HEK293 (cell line): ENCODE measurements at regions of chr2 and their contacts with region 1.

Region 1: DNA sequence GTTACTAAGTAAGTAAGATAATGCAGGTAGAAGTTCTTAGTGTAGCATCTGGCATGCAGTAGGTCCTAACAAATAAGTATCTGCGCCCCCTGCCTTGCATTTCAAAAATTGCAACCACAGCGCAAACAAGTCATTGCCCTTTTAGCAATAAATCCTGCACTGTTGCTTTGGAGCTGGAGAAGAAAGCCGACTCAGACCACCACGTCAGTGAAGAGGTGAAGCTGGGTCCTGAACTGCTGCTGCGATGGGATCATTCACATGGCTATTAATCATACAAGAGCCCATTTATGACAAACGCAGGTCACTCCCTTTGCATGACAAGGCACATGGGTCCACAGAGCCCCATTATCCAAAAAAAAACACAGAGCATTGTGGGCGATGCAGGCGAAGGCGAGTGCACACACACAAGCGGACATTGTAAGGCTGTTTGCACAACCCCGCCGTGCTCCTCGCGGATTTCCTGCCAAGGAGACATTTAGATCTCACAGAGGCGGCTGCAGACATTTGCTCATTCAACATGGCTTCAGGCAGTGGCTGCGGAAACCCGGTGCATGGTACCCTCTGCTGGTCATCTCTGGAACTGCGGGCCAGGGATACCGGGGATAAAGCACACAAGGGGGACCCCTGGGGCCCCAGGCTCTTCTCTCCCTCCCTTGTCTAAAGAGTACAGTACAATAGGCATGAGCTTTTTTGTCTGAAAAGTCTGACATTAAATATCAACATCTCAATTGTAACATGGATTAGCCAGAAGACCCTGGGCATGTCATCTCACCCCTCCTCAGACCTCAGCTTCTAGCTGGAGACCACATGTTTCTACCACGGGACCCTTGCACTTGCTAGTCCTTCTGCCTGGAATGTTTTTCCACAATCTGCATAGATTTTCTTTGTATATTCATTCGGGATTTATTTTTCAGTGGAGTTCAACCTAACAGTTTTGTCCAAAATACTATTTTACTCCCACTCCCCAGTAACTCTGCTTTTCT is 56.7 kb downstream of the CYRIA start:
- H3K4me3 ChIP-seq: peak overlapping the region; percentile 41
- H3K27ac ChIP-seq: peak overlapping the region; percentile 18; the same call in 1 of the 2 replicates
- H3K4me1 ChIP-seq: peaks cover 3% of the 10 kb centered on the region; the same call in 1 of the 2 replicates
- CTCF ChIP-seq: peak; percentile 58

Region 2: DNA sequence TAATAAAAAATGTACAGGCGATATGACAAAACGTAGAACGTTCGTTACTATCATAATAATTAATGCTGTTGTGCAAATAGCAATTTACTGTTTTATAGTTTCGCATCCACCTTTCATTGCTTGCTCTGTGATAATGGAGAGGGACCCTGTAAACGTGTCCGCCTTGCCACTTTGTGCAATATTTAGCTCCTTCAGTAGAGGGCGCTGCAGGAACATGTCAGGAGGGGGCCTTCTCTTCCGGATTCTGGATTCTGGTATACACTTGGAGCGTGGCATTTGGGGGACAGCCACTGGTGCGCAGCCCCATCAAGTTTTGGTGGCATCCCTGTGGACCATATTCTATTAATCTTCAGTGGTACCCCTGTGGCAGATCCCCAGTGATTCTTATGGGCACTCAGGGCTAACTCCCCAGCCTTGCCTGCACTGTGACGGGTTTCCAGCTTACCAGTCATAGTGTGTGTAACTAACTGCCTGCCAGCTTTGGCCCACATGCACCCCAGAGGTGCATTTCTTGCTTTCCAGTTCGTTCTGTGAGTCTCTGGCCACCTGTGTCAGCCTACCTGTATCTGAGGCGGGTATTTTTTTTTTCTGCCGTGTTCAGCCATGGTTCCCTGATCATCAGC is 83.6 kb before region 1 on chr2:
- CTCF ChIA-PET with region 1: interaction called, 57 read pairs
- POLR2A ChIA-PET with region 1: no interaction called
- H3K4me3 ChIP-seq: no peak overlapping the region
- H3K27ac ChIP-seq: no peak overlapping the region
- H3K4me1 ChIP-seq: no peaks in the 10 kb centered on the region
- CTCF ChIP-seq: peak; percentile 42; the same call in 1 of the 2 replicates

Region 3: GRCh38 chr2:16591370-16591933 is 17.5 kb before region 1 on chr2:
- CTCF ChIA-PET with region 1: interaction called, 10 read pairs
- POLR2A ChIA-PET with region 1: no interaction called
- H3K4me3 ChIP-seq: no peak overlapping the region
- H3K27ac ChIP-seq: no peak overlapping the region
- H3K4me1 ChIP-seq: no peaks in the 10 kb centered on the region
- CTCF ChIP-seq: no peak

Region 4: DNA sequence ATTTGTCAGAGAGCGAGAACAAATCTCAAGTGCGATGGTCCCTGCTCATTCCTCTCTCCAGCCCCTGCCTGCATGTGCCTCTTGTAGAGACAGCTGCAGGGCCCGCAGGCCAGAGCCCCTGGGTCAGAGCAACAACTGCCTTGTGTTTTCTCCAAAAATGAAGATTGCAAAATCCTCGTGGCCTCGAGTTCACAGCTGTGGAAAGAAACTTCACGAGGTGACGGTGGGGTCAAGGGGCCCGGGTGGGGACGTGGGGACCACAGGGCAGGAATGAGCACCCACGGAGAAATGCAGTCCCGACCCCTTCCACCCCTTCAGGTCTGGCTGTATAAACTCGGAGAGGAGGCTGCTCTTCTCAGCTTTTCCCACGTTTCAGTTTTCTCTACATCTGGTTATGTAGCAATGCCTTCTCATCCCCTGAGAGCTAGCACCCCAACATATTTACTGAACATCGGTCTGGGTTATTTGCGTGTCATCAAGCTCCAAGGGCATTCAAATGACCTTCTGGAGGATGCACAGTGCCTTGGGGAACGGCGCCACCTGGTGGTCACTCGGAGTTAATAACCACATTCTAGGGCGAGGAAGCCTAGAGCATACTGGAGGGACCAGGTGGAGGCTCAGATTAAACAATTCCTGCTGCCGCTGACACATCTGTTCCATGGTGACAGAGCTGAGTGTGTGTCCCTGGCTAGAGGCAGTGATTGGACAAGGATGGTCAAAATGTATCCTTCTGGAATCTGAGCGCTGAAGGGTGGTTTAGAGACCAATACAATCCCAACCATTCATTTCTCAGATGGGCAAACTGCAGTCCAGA is 148.1 kb after region 1 on chr2:
- CTCF ChIA-PET with region 1: interaction called, 126 read pairs
- POLR2A ChIA-PET with region 1: no interaction called
- H3K4me3 ChIP-seq: no peak overlapping the region
- H3K27ac ChIP-seq: no peak overlapping the region
- H3K4me1 ChIP-seq: no peaks in the 10 kb centered on the region
- CTCF ChIP-seq: peak; percentile 81

Region 5: GRCh38 chr2:16773080-16773713 is 164.2 kb after region 1 on chr2:
- CTCF ChIA-PET with region 1: interaction called, 15 read pairs
- POLR2A ChIA-PET with region 1: no interaction called
- H3K4me3 ChIP-seq: no peak overlapping the region
- H3K27ac ChIP-seq: no peak overlapping the region
- H3K4me1 ChIP-seq: no peaks in the 10 kb centered on the region
- CTCF ChIP-seq: peak; percentile 66